Spleen (tissue), 13 donors: ENCODE measurements at regions of chrX and their contacts with region 1.

Region 1: DNA sequence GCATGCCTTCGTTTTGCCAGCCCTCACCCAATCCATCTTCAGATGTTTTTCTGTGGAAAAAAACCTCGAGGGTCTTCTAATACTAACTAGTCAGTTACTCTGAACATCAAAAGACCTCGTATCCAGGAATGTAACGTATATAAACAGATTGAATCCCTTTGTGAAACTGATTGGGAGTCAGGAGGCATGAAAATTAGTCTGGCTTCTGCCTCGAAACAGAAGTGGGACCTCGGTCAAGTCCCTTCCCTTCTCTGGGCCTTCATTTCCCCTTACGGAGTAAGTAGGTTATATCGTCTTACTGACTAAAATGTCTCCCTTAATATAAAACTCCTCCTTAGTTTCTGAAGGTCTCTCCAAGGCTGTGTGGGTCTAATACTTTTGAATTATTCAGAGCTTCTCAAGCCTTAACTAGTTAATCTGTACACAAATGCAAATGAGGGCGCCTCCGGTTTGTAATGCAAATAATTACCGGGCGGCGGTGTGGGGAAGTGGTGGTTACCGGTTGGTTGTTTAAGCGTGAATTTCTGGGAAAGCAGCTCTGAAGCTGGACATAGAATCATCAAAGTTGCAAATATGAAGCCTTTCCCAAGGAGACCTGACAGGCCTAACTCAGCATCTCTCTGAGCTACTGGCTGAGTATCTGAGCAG is 11.4 kb upstream of the NKRF start:
- DNase-seq: no peak
- H3K4me3 ChIP-seq: peak overlapping the region in 2 of 8 donors; percentile 25 to 41
- H3K27ac ChIP-seq: peak overlapping the region in 7 of 8 donors; percentile 32 to 81 (median 75)
- H3K4me1 ChIP-seq: peaks cover 2 to 44% (median 15%) of the 10 kb centered on the region in 6 donors
- H3K27me3 ChIP-seq: no peaks in the 10 kb centered on the region
- CTCF ChIP-seq: no peak
- POLR2A ChIP-seq: no peak

Region 2: DNA sequence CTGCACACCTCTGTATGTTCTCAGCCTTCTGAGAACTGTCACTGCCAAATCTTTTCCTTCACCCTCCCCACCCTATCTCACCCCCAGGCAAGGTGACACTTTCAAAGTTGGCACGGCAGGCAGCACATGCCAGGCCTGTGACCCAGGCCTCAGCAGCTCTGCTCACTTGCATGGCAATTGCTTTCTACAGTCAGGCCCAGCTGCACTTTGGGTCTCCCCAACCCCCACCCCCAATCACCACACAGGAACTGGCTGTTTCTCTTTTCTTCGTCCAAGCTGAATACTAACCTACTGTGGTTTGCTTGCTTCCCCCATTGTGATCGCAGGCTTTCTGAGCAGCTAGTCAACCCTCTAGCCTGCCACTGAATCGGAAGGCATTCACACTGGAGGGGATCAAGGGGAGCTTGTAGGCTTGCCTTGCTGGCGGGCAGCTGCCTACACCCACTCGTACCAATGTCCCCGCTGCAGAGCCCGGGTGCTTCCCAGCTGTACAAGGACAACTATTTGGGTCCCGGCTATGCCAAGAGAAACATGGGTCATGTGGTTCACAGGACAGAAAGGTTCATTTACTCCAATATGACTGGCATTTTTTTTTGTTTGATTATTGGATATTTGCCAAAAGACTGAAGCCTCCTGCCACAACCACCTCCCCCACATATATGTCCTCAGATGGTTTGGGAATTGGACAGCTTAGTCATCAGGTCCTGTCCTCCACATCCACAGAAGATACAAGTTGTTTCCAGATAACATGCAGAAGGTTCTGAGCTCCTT is 190.4 kb before region 1 on chrX:
- intact Hi-C with region 1: no loop called
- DNase-seq: peak; percentile 76
- H3K4me3 ChIP-seq: no peak overlapping the region
- H3K27ac ChIP-seq: peak overlapping the region in 6 of 8 donors; percentile 42 to 79 (median 61)
- H3K4me1 ChIP-seq: peaks cover 0 to 20% (median 11%) of the 10 kb centered on the region in 6 donors
- H3K27me3 ChIP-seq: no peaks in the 10 kb centered on the region
- CTCF ChIP-seq: no peak
- POLR2A ChIP-seq: no peak

Region 3: GRCh38 chrX:119693040-119693995 is 75.7 kb after region 1 on chrX and contains the start of gene SEPTIN6:
- intact Hi-C with region 1: loop called (anchors 10 kb)
- DNase-seq: peak; percentile 95
- H3K4me3 ChIP-seq: peak within 1 kb of the TSS; percentile 67 to 96 (median 79)
- H3K27ac ChIP-seq: peak within 1 kb of the TSS; percentile 83 to 98 (median 91)
- H3K4me1 ChIP-seq: peaks cover 10 to 56% (median 24%) of the 10 kb centered on the region in 6 donors
- H3K27me3 ChIP-seq: peaks cover 0 to 5% (median 0%) of the 10 kb centered on the region in 7 donors
- CTCF ChIP-seq: peak in 9 of 11 experiments; percentile 13 to 52 (median 29)
- POLR2A ChIP-seq: peak; percentile 67 to 89 (median 78)
- total RNA-seq, gene SEPTIN6: 94.7 to 139 (median 99.8) TPM

Region 4: DNA sequence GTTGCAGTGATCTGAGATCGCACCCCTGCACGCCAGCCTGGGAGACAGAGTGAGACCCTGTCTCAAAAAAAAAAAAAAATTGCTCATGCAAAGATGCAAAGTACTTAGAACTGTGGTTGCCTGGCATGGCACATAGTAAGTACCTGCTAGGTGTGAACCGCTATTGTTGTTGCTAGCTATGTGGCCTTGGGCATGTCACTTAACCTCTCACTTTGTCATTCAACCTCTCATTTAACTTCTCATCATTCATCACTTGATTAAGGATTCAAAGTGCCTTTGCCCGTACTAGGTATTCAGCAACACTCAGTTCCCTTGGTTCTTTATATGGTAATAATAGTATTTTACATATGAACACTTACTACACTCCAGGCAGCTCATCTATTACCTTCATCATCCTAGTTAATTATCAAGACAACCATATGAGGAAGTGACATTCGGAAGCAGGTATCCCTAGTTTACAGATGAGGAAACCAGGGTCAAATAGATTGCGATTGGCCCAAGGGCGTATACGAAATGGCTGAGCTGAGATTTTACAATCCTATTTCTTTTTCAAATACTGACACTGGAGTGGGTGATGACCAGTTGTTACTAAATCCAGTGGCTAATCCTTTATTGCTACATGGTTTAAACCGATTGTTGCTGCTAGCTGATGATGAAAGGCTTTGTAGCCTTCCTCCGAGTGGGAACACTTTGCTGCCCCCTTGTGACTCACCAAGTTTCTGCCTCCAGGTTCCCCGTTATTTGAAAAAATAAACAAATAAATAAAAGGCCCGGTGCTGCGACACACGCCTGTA is 112.0 kb after region 1 on chrX:
- intact Hi-C with region 1: loop called (anchors 5 kb)
- DNase-seq: peak; percentile 76
- H3K4me3 ChIP-seq: peak overlapping the region in 1 of 8 donors; percentile 21
- H3K27ac ChIP-seq: no peak overlapping the region
- H3K4me1 ChIP-seq: peaks cover 0 to 10% (median 3%) of the 10 kb centered on the region in 6 donors
- H3K27me3 ChIP-seq: no peaks in the 10 kb centered on the region
- CTCF ChIP-seq: peak; percentile 24 to 76 (median 68)
- POLR2A ChIP-seq: no peak

Region 5: GRCh38 chrX:119852382-119853353 is 235.0 kb after region 1 on chrX and contains the start of gene UPF3B:
- intact Hi-C with region 1: no loop called
- DNase-seq: peak; percentile 97
- H3K4me3 ChIP-seq: peak within 1 kb of the TSS; percentile 50 to 86 (median 62)
- H3K27ac ChIP-seq: peak within 1 kb of the TSS; percentile 63 to 92 (median 88)
- H3K4me1 ChIP-seq: peaks cover 0 to 24% (median 10%) of the 10 kb centered on the region in 6 donors
- H3K27me3 ChIP-seq: no peaks in the 10 kb centered on the region
- CTCF ChIP-seq: no peak
- POLR2A ChIP-seq: peak in 1 of 3 donors; percentile 14
- total RNA-seq, gene UPF3B: 5.4 to 11.1 (median 9.0) TPM